ENCODE measurements at regions of chr5 and their contacts with region 1.

Region 1: GRCh38 chr5:173887610-173888472 is at the start of gene CPEB4:
- DNase-seq: peak; percentile 99 to 100 (median 100)
- ATAC-seq: peak; percentile 98
- H3K4me3 ChIP-seq: peak within 1 kb of the TSS; percentile 86
- H3K27ac ChIP-seq: peak within 1 kb of the TSS; percentile 84
- H3K4me1 ChIP-seq: peaks cover 7% of the 10 kb centered on the region
- H3K27me3 ChIP-seq: no peaks in the 10 kb centered on the region
- total RNA-seq, gene CPEB4: 92.4 to 152 (median 98.8) TPM

Region 2: GRCh38 chr5:173615884-173616576 is 271.8 kb before region 1 on chr5:
- intact Hi-C with region 1: loop called in 2 of 4 experiments (anchors 10 kb)
- DNase-seq: peak; percentile 59 to 81 (median 78)
- ATAC-seq: peak; percentile 68 to 71
- H3K4me3 ChIP-seq: peak overlapping the region; percentile 92
- H3K27ac ChIP-seq: peak overlapping the region; percentile 96
- H3K4me1 ChIP-seq: peaks cover 13% of the 10 kb centered on the region
- H3K27me3 ChIP-seq: no peaks in the 10 kb centered on the region

Region 3: DNA sequence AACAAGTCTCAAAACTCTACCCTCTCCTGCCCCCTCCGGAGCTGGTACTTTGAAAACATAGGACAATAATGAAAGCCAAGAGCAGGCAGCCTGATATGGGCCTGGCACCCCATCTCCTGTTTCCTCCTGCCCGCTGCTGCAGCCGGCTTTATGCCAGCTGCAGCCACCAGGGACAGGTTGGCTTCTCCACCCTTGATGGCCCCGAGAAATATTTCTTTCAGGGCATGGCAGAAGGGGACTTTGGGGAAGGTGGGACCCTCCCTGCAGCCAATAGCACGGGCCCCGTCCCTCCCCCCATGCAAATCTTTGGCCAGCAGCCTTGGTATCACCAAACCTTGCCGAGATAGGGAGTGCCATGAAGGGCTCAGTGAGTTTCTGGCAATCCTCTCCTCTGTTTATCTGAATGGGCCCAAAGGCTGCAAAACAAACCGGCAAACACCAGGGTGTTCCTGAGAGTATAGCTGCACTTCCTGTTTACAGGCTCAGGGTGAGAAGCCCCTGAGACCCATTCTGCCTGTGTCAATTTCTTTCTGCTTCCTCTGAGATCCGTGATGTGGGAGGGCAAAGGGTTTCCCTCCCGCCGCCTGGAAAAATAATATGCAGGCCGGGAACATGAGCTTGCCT is 198.0 kb before region 1 on chr5:
- intact Hi-C with region 1: loop called in 1 of 4 experiments (anchors 10 kb)
- DNase-seq: peak in 1 of 3 donors; percentile 59
- ATAC-seq: peak; percentile 59 to 70
- H3K4me3 ChIP-seq: no peak overlapping the region
- H3K27ac ChIP-seq: peak overlapping the region; percentile 82
- H3K4me1 ChIP-seq: peaks cover 4% of the 10 kb centered on the region
- H3K27me3 ChIP-seq: no peaks in the 10 kb centered on the region

Region 4: DNA sequence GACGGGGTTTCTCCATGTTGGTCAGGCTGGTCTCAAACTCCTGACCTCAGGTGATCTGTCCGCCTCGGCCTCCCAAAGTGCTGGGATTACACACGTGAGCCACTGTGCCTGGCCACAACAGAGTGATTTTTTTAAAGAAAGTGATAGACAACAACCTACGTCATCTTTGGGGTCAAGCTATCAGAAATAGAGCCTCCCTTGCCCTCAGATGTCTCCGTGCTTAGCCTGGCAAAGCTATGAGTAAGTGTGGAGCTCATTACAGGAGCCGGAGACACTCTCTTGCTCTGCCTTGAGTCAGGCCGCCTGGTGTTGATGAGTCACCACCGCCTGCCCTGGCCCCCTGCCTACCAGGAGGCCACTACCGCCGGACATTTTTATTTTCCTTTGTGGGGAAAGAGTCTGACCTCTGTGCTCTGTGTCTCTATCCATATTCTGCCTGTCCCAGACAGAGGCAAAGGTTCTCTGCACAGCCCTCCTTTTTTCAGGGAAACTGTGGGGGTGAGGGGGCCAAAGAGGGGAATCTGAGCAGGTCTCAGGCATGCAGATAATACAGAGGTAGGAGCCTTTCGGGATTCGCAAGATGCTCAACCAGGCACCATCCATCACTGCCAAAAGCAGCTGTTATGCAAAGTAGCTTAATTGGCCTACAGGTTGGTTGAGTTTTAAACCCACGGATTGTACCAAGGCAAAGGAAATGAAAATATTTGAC is 123.4 kb before region 1 on chr5:
- intact Hi-C with region 1: loop called in 2 of 4 experiments (anchors 10 kb)
- DNase-seq: peak; percentile 86 to 90 (median 88)
- ATAC-seq: peak; percentile 73 to 90
- H3K4me3 ChIP-seq: no peak overlapping the region
- H3K27ac ChIP-seq: peak overlapping the region; percentile 89
- H3K4me1 ChIP-seq: peaks cover 9% of the 10 kb centered on the region
- H3K27me3 ChIP-seq: no peaks in the 10 kb centered on the region

Region 5: GRCh38 chr5:173954671-173955521 is 67.1 kb after region 1 on chr5:
- intact Hi-C with region 1: loop called in 3 of 4 experiments (anchors 10 kb)
- DNase-seq: no peak
- ATAC-seq: peak; percentile 81 to 88
- H3K4me3 ChIP-seq: no peak overlapping the region
- H3K27ac ChIP-seq: peak overlapping the region; percentile 96
- H3K4me1 ChIP-seq: no peaks in the 10 kb centered on the region
- H3K27me3 ChIP-seq: no peaks in the 10 kb centered on the region

Region 6: GRCh38 chr5:173963867-173964441 is 76.1 kb after region 1 on chr5:
- intact Hi-C with region 1: loop called in 3 of 4 experiments (anchors 10 kb)
- DNase-seq: no peak
- ATAC-seq: peak; percentile 9 to 29
- H3K4me3 ChIP-seq: no peak overlapping the region
- H3K27ac ChIP-seq: peak overlapping the region; percentile 48
- H3K4me1 ChIP-seq: no peaks in the 10 kb centered on the region
- H3K27me3 ChIP-seq: no peaks in the 10 kb centered on the region

Region 7: DNA sequence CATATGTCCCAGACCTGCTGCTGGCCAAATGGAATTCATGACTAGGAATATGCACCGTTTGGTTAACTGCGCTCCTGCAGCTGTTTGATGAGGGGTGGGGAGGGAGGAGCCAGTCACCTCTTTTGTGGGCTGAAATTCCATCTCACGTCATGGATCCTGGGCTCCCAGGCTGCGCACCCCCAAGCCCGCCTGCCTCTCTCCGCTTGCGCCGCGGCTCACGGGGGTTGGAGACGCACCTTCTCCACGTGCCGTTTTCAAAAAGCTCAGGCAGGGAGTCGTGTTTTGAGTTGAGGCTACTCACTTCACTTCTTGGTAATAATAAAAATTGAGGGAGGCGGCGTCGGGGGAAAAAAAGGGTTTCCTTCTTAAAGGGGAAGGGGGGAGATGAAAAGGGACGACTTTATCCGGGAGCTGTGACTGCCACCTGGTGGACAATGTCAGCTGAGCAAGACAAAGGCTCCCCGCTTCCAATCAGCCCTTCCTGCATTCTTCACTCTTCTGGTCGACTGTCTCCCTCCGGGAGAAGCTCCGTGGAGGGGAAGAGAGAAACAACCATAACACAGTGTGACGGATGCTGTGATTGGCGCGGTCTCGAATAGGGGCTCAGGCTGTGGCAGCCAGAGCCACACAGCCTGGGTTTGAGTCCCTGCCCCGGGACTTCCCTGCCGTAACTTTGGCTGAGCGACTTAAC is 85.2 kb after region 1 on chr5:
- intact Hi-C with region 1: loop called in 3 of 4 experiments (anchors 5 to 10 kb)
- DNase-seq: peak; percentile 83 to 91 (median 87)
- ATAC-seq: peak; percentile 83 to 85
- H3K4me3 ChIP-seq: peak overlapping the region; percentile 23
- H3K27ac ChIP-seq: peak overlapping the region; percentile 38
- H3K4me1 ChIP-seq: peaks cover 6% of the 10 kb centered on the region
- H3K27me3 ChIP-seq: no peaks in the 10 kb centered on the region

Region 8: GRCh38 chr5:174920906-174921550 is 1033.2 kb after region 1 on chr5:
- intact Hi-C with region 1: no loop called
- DNase-seq: no peak
- ATAC-seq: no peak
- H3K4me3 ChIP-seq: no peak overlapping the region
- H3K27ac ChIP-seq: no peak overlapping the region
- H3K4me1 ChIP-seq: peaks cover 2% of the 10 kb centered on the region
- H3K27me3 ChIP-seq: no peaks in the 10 kb centered on the region